ENCODE measurements at regions of chr1 and their contacts with region 1.

Region 1: DNA sequence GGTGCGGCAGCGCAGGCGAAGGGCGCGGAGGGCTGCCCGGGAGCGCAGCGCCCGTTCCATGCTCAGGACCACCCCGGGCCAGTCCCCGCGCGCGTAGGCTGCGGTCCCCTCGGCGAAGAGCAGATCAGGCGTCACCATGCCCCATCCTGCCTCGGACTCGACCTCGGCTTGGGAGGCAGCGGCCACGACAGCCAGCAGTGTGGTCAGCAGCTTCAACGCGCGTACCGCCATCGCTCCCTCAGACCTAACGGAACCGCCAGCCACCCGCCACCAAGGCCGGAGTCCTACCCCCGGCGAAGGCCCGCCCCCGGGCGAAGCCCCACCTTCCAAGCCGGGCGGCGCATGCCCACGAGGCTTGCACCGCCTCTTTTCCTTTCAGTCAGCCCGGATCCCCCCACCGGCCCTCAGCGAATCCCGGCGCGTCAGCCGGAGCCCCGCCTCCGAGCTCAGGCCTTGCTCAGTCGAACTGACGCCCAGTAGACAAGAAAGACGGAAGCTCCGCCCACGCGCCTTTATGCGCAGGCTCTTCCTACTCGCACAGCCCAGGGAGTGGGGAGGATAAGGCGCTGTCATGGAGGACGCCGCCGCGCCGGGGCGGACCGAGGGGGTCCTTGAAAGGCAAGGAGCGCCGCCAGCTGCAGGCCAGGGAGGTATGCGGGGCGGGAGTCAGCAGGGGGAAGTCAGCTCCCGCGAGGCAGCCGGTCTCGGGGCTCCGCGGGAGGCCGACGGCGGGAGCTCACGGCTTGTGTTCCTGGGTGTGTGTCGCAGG is at the starts of genes C1orf50 and P3H1:
- H3K4me3 ChIP-seq: peak within 1 kb of the TSS; percentile 100
- H3K27ac ChIP-seq: peak within 1 kb of the TSS; percentile 54; the same call in 1 of the 2 replicates
- H3K4me1 ChIP-seq: no peaks in the 10 kb centered on the region
- CTCF ChIP-seq: peak; percentile 62

Region 2: DNA sequence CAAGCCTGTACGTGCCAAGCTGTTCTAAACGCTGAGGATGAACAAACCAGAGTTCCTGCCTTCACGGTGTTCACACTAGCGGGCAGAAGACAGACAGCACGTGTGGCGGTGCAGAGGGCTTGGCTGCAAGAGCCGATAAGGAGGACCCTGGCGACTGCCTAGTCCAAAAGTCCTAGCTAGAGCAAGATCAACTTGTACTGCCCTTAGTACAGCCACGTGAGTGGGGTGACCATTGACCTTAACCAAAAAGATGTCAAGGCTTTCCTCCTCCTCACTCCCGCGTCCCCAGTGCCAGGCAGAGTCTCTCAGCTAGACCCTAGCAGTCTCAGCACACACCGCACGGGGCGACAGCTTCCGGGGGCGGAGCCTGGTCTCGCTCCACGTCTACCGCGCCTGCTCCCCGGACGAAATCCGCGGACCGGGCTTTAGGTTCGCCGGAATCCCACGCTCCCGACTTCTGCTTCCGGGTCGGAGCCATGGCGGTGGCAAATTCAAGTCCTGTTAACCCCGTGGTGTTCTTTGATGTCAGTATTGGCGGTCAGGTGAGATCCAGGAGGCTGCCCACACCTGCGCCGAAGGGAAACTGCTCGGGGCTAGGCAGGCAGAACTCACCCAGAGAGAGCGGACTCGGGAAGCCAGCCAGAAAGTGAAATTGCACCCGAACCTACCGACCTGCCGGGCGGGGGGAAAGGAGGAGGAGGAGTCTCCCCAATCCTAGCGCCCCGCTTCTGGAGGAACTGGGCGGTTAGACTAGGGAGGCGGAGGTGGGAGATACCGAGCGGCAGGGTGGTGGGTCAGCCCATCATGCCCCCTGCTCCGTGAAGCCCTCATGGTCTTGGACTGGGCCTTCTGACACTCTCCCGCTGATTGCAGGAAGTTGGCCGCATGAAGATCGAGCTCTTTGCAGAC is 108.7 kb before region 1 on chr1 and contains the start of gene PPIH:
- CTCF ChIA-PET with region 1: interaction called, 4 read pairs
- POLR2A ChIA-PET with region 1: interaction called, 17 read pairs
- H3K4me3 ChIP-seq: peak within 1 kb of the TSS; percentile 74
- H3K27ac ChIP-seq: peak within 1 kb of the TSS; percentile 67
- H3K4me1 ChIP-seq: no peaks in the 10 kb centered on the region
- CTCF ChIP-seq: peak; percentile 82

Region 3: GRCh38 chr1:42777852-42778251 is 10.9 kb after region 1 on chr1:
- CTCF ChIA-PET with region 1: interaction called, 19 read pairs
- POLR2A ChIA-PET with region 1: interaction called, 13 read pairs
- H3K4me3 ChIP-seq: no peak overlapping the region
- H3K27ac ChIP-seq: no peak overlapping the region
- H3K4me1 ChIP-seq: no peaks in the 10 kb centered on the region
- CTCF ChIP-seq: peak; percentile 64

Region 4: DNA sequence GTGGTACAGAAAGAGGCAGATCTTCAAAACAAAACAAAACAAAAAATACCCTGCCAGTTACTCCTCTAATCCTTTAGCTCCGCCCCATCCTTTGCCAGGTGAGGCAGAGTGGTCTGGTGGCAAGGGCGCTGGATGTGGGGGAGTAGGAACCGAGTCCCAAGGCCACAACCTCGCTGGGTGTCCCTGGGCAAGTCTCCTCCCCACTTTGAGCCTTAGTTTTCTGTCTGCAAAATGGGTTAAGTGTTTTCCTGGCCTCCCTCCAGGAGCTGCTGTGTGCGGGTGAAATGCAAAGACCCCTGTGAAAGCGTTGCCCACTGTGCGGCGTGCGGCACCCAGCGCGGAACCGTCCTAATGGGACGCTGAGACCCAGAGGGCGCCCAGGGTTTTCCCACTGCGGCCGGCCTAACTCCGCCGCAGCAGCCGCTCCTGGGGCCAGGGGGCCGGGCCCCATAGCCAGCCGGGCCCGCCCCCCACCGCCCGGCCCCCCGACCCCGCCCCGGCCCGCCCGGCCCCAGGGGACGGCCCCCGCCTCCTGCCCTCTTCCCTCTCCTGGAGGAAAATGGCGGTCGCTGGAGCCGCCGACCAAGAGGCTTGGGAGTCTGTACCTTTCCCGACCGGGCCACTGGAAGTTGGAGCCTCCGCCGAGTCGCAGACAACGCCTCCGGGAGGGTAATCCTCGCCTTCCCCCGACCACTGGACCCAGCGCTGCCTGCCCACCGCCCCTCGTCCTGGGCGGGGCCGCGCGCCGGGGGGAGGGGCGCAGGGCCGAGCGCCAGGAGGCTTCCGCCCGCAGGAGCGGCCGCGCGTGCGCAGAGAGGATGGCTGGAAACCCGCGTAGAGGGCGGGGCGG is 49.9 kb after region 1 on chr1 and contains the starts of genes ERMAP and SVBP:
- CTCF ChIA-PET with region 1: no interaction called
- POLR2A ChIA-PET with region 1: interaction called, 25 read pairs
- H3K4me3 ChIP-seq: peak within 1 kb of the TSS; percentile 86
- H3K27ac ChIP-seq: peak within 1 kb of the TSS; percentile 98
- H3K4me1 ChIP-seq: peaks cover 2% of the 10 kb centered on the region; the same call in 1 of the 2 replicates
- CTCF ChIP-seq: peak; percentile 69

Region 5: DNA sequence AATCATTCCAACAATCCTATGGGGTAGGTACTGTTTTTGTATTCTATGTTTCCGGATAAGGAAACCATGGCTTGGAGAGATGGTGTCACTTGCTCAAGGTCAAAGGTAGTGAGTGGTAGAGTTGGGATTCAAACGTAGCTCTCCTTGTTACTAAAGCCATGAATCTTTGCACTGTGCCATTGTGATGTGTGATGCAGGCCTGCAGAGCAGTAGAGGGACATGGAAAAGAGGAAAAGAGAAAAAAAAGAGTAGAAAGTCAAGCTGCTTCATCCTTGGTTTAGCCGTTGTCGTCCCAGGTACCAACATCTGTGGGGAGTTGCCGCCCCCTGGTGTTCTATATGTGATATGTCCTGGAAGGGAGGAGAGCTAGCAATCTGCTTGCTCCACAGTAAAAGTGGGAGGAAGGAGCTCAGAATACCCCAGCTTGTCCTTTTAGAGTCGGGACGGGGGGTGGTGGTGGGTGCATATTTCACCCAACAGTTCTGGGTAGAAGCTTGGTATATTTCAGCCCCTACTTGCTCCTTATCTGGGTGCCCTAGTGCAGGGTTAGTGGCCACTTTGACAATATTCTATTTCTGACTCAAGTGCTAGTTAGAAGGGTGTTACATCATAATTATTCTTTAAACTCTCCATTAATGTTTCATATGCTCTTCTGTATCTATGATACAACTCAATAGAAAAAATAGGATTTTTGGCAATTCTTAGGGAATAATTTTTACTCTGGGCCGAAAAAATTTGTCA is 306.7 kb after region 1 on chr1:
- CTCF ChIA-PET with region 1: interaction called, 7 read pairs
- POLR2A ChIA-PET with region 1: interaction called, 10 read pairs
- H3K4me3 ChIP-seq: no peak overlapping the region
- H3K27ac ChIP-seq: no peak overlapping the region
- H3K4me1 ChIP-seq: no peaks in the 10 kb centered on the region
- CTCF ChIP-seq: peak; percentile 73

Measured in HEK293 (cell line).